Transverse colon (tissue), 4 donors: ENCODE measurements at regions of chr4 and their contacts with region 1.

Region 1: GRCh38 chr4:21765810-21766407 is 182.7 kb downstream of the KCNIP4 start:
- DNase-seq: peak; percentile 19
- H3K4me3 ChIP-seq: no peak overlapping the region
- H3K27ac ChIP-seq: no peak overlapping the region
- H3K4me1 ChIP-seq: no peaks in the 10 kb centered on the region
- H3K27me3 ChIP-seq: no peaks in the 10 kb centered on the region
- CTCF ChIP-seq: peak; percentile 64 to 84 (median 72)
- EP300 ChIP-seq: no peak
- POLR2A ChIP-seq: no peak

Region 2: GRCh38 chr4:19987746-19988145 is 1778.2 kb before region 1 on chr4:
- in situ Hi-C with region 1: no loop called
- intact Hi-C with region 1: no loop called
- DNase-seq: no peak
- H3K4me3 ChIP-seq: no peak overlapping the region
- H3K27ac ChIP-seq: no peak overlapping the region
- H3K4me1 ChIP-seq: no peaks in the 10 kb centered on the region
- H3K27me3 ChIP-seq: no peaks in the 10 kb centered on the region
- CTCF ChIP-seq: no peak
- EP300 ChIP-seq: no peak
- POLR2A ChIP-seq: no peak

Region 3: DNA sequence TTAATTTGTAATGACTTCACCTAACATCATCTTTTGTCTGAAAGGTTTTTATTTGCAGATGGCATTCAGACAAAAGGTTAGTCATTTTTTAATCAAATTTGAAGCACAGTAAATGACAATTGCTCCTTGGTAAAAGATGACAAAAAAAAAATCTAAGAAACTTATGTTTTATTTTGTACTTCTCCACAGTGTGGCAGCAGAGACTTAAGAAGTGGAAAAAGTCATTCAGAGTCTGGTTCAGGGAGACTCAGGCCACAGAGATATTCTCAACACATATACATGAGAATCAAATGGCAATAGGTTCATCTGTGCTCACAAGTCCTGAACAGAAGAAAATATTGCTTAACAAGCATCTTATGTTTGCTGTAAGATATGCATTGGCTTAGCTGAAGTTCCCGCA is 253.6 kb before region 1 on chr4:
- in situ Hi-C with region 1: loop called (anchors 5 to 25 kb)
- intact Hi-C with region 1: loop called (anchors 5 kb)
- DNase-seq: no peak
- H3K4me3 ChIP-seq: no peak overlapping the region
- H3K27ac ChIP-seq: no peak overlapping the region
- H3K4me1 ChIP-seq: no peaks in the 10 kb centered on the region
- H3K27me3 ChIP-seq: no peaks in the 10 kb centered on the region
- CTCF ChIP-seq: peak; percentile 22 to 40 (median 35)
- EP300 ChIP-seq: no peak
- POLR2A ChIP-seq: no peak

Region 4: DNA sequence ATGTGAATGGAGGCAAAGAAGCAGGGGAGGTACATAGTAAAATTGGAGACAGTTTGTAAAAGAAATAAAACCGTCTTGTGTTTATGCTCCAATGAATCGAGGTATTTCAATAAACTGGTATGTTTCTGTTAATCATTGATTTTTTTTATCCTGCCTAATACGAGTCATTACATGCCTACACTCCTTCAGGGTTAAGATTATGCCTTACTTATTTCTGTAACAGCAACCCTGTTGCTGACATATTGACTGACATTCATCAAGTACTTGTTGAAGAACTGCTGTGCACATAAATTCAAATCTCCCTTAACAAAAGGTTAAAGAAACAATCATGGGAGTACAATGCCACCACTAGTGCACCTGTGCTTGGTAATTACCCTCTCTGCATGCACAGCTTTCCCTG is 248.4 kb before region 1 on chr4:
- in situ Hi-C with region 1: loop called (anchors 5 to 25 kb)
- intact Hi-C with region 1: loop called (anchors 5 kb)
- DNase-seq: no peak
- H3K4me3 ChIP-seq: no peak overlapping the region
- H3K27ac ChIP-seq: no peak overlapping the region
- H3K4me1 ChIP-seq: no peaks in the 10 kb centered on the region
- H3K27me3 ChIP-seq: no peaks in the 10 kb centered on the region
- CTCF ChIP-seq: no peak
- EP300 ChIP-seq: no peak
- POLR2A ChIP-seq: no peak

Region 5: GRCh38 chr4:21664355-21664754 is 101.6 kb before region 1 on chr4:
- in situ Hi-C with region 1: no loop called
- intact Hi-C with region 1: no loop called
- DNase-seq: no peak
- H3K4me3 ChIP-seq: no peak overlapping the region
- H3K27ac ChIP-seq: no peak overlapping the region
- H3K4me1 ChIP-seq: no peaks in the 10 kb centered on the region
- H3K27me3 ChIP-seq: no peaks in the 10 kb centered on the region
- CTCF ChIP-seq: no peak
- EP300 ChIP-seq: no peak
- POLR2A ChIP-seq: no peak

Region 6: DNA sequence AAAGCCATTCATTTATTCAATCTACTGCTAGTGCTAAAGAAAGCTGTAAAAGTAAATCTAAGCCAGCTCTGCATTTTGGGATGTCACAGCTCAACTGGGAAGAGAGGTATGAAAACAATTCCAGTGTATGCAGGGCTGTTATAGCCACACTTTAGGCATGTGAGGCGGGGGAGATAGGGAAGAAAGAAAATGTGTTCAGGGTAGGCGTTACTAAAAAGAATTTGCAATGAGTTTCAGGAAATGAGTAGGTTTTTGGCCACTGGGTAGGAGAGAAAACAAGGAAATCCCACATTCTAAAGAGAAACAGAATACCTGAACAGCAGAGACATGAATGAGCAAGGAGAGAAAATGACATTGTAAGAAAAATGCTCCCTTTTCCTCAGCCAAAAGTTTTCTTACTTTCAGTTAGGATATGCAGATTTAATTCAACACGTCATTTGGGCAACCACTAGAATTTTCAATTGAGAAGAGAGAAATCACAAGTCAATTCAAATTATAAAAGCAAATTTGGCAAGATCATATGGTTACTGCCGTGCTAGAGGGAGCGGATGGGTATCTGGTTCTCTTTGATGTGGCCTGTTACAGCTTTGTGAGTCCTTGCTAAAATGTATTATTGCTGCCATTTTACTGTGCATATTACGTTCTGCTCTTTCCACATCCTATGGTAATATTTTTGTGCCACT is 43.6 kb before region 1 on chr4:
- in situ Hi-C with region 1: no loop called
- intact Hi-C with region 1: no loop called
- DNase-seq: no peak
- H3K4me3 ChIP-seq: no peak overlapping the region
- H3K27ac ChIP-seq: no peak overlapping the region
- H3K4me1 ChIP-seq: no peaks in the 10 kb centered on the region
- H3K27me3 ChIP-seq: no peaks in the 10 kb centered on the region
- CTCF ChIP-seq: no peak
- EP300 ChIP-seq: no peak
- POLR2A ChIP-seq: no peak

Region 7: GRCh38 chr4:22063613-22064012 is 297.7 kb after region 1 on chr4:
- in situ Hi-C with region 1: no loop called
- intact Hi-C with region 1: no loop called
- DNase-seq: no peak
- H3K4me3 ChIP-seq: no peak overlapping the region
- H3K27ac ChIP-seq: no peak overlapping the region
- H3K4me1 ChIP-seq: no peaks in the 10 kb centered on the region
- H3K27me3 ChIP-seq: no peaks in the 10 kb centered on the region
- CTCF ChIP-seq: no peak
- EP300 ChIP-seq: no peak
- POLR2A ChIP-seq: no peak